ENCODE measurements at regions of chr2 and their contacts with region 1.

Region 1: DNA sequence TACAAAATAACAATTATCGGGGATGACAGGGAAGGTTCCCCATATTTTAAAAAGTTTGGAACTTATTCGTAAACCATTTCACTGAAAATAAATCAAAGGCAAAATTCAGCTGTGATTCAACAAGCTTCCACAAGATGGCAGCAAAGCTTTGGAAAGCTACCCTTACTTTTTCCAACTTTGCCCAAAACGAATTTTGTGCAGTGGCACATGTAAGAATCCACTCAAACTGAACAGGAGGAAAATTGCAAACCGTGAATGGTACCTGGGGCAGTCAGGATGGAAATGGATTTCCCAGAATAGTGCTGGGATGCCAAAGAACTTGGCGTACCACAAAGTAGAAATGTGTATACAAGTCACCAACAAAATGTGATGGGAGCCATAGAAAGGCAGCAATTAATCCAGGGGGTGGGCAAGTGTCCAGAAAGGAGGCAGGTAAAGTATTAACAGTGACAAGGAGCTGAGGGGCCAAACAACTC is 10.7 kb downstream of the RPL31 start:
- DNase-seq: peak; percentile 54
- ATAC-seq: no peak
- H3K4me3 Mint-ChIP-seq: no peak overlapping the region
- H3K27ac Mint-ChIP-seq: no peak overlapping the region
- H3K4me1 Mint-ChIP-seq: peaks cover 18% of the 10 kb centered on the region
- H3K27me3 Mint-ChIP-seq: no peaks in the 10 kb centered on the region

Region 2: GRCh38 chr2:100909534-100910081 is 103.1 kb before region 1 on chr2:
- CTCF ChIA-PET with region 1: no interaction called
- POLR2A ChIA-PET with region 1: no interaction called
- DNase-seq: no peak
- ATAC-seq: no peak
- H3K4me3 Mint-ChIP-seq: no peak overlapping the region
- H3K27ac Mint-ChIP-seq: no peak overlapping the region
- H3K4me1 Mint-ChIP-seq: peaks cover 12% of the 10 kb centered on the region
- H3K27me3 Mint-ChIP-seq: no peaks in the 10 kb centered on the region

Region 3: DNA sequence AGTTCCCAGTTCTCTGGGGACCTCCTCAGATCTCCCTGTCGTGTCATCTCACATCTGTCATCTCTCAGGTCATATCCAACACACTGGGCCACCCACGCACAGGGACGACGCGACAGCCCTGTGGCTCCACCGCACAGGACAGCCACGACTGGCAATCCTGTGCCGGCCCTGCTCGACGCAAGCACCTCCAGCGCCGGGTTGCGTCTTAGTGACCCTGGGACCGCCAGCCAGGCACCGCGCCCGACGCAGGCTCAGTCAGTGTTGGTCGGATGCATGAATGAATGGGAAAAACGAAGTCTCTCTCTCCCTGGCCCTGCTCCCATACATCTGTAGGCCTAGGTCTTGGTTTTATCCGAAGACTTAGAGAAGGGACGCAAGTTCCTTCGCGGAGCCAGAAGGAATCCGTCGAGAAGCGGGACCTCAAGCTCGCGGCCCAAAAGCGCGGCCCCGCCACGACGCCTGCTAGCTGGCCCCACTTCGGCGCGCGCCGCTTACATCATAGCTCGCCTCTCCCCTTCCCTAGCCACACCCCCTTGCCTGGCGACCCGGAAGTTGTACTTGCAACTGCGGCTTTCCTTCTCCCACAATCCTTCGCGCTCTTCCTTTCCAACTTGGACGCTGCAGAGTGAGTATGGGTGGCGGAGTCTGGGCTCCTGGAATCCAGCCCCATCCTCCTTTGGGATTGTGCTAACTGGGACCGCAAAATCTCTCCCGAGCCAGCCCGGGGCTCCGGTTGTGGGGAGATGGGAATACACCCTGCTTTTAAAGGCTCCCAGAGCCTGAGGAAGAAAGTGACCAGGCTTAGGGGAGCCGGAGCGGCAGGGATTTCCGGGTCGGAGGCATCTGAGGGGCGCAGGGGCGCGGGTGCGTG is 10.8 kb before region 1 on chr2 and contains the start of gene RPL31:
- CTCF ChIA-PET with region 1: interaction called, 29 read pairs
- POLR2A ChIA-PET with region 1: interaction called, 8 read pairs
- DNase-seq: peak; percentile 98
- ATAC-seq: peak; percentile 95
- H3K4me3 Mint-ChIP-seq: peak within 1 kb of the TSS; percentile 94
- H3K27ac Mint-ChIP-seq: peak within 1 kb of the TSS; percentile 96
- H3K4me1 Mint-ChIP-seq: peaks cover 44% of the 10 kb centered on the region
- H3K27me3 Mint-ChIP-seq: peaks cover 3% of the 10 kb centered on the region
- total RNA-seq, gene RPL31: 1,300 to 1,339 TPM

Region 4: DNA sequence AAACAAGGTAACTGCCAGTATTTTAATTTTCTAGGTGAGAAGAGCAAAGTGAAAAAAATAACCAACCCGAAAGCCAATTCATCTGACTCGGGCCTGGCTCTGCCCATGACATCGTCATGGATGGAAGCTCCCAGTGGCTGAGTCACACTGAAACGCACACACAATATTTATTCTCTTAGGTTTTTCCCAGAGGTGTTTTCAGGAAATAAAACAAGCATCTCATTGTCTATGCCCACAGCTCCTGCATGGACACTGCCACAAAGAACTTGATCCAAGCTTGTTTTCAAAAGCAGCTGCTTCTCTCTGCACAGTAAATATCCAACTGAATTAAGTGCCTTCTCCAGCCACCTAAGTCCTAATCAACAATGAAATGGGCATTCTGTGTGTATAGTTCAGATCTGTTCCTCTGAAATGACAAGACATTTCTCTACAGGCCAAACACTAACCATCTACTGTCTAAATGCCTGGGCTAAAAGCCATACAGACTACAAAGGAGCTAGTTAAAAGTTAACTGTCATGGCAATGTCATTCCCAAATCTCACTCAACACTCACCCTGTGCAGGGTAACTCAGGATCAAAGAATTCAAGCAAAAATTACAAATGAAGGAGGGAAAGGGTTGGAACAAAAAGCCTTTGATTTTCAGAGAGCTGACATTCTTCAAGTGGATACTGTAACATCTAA is 52.3 kb after region 1 on chr2:
- CTCF ChIA-PET with region 1: no interaction called
- POLR2A ChIA-PET with region 1: no interaction called
- DNase-seq: no peak
- ATAC-seq: no peak
- H3K4me3 Mint-ChIP-seq: no peak overlapping the region
- H3K27ac Mint-ChIP-seq: no peak overlapping the region
- H3K4me1 Mint-ChIP-seq: no peaks in the 10 kb centered on the region
- H3K27me3 Mint-ChIP-seq: peaks cover 3% of the 10 kb centered on the region

Region 5: DNA sequence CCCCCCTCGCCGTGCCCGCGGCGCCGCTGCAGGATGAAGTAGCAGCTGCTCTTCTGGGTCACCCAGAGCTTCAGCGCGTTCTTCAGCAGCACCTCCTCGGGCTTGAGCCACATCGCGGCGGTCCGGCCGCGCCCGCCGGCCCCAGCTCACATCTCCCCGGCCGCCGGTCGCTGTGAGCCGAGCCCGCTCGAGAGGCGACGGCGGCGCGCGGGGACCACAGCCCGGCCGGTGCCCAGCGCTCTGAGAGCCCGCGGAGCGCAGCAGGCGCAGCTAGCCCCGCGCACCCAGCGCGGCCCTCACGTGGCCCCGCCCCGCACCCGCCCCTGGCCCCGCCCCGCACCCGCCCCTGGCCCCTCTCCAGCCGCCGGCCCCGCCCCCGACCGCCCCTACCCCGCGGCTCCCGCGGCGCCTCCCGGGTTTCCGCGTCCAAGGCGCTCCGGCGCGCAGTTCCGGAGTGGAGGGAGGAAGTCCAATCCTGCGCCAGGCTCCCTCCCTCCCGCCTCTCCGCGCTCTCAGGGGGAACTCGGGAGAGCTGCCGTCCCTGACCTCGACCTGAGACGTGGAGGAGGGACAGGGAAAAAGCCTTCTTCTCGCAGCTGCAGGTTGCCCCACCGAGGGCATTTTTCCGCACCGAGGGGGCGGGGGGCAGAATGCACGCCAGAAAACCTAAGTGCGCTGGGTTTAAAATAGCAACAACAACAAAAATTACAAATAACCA is 138.6 kb after region 1 on chr2 and contains the start of gene TBC1D8:
- CTCF ChIA-PET with region 1: interaction called, 14 read pairs
- POLR2A ChIA-PET with region 1: no interaction called
- DNase-seq: peak; percentile 65
- ATAC-seq: peak; percentile 94
- H3K4me3 Mint-ChIP-seq: peak within 1 kb of the TSS; percentile 73
- H3K27ac Mint-ChIP-seq: no peak within 1 kb of the TSS
- H3K4me1 Mint-ChIP-seq: peaks cover 17% of the 10 kb centered on the region
- H3K27me3 Mint-ChIP-seq: peaks cover 59% of the 10 kb centered on the region
- total RNA-seq, gene TBC1D8: 0.29 to 0.70 TPM

Measured in activated CD8-positive, alpha-beta T cell treated with anti-CD3 and anti-CD28 coated beads, Interleukin-2, amount 10 ng/mL, durations not matched to agents 7 days and 5 days (primary cell).